ENCODE measurements at regions of chr3 and their contacts with region 1.

Region 1: DNA sequence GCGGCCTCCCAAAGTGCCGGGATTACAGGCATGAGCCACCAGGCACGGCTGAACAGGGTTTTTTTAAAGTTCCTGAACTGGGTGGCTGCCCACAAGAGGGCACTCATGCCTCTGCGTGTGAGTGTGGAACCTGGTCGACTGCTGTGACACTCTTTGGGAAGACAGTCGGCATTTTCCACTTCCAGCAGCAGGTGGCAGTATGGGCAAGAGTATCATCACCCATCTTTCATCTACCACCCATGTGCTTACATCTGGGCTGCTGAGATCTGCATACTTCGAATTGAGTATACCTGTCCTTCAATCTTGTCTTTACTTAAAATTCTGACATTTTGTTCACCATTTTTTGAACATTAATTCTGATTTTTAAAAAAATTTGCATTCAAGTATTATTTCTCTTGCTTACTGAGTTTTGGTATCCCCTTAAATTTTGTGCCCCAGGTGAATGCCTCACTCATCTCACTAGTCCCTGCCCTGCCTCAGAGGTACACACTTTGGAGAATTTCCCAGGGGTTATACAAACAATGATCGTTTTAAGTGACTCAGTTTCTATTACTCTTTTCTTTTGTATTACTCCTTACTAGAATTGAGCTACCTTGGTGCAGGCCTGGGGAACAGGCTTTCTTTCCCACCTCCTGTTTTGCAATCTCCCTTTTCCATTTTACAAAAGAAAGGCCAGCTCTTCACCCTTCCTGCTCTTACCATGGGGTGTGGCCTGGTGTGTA is 11.8 kb downstream of the CLEC3B start:
- DNase-seq: peak; percentile 86
- H3K27ac ChIP-seq: no peak overlapping the region
- CTCF ChIP-seq: peak; percentile 97

Region 2: DNA sequence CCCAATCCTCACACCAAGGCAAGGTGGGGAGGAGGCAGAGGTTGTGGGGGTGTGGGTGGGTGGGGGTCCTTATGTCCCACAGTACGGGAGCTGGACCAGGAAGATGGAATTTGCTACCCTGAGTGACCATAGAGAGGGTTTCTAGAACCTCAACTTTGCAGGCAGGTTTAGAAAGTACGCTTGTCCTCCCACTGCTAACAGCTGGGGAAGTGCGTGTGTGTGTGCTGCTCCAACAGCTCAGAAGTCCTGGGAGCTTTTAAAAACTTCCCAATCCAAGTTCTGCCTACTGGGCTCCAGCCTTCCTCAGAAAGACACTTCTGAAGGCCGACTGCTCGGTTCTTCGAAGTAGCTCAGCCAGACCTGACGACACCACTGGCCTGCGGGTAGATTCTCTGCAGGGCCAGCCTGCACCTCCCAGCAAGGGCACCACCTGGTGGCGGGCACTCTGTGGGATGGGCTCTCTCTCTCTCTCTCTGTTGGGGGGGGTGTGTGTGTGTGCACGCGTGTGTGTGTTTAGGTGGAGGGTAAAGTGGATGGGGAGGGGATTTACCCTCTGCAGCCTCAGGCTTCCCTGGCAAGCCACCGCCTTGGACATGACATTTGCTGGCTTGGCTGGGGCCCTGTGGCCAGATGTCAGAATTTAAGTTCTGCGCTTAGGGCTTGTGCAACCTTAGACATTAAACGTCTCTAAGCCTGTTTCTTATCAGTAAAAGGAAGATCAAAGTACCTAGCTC is 172.6 kb after region 1 on chr3:
- CTCF ChIA-PET with region 1: interaction called, 10 read pairs
- POLR2A ChIA-PET with region 1: no interaction called
- DNase-seq: peak; percentile 62
- H3K27ac ChIP-seq: peak overlapping the region; percentile 48
- CTCF ChIP-seq: peak; percentile 79

Region 3: GRCh38 chr3:45499529-45499928 is 461.6 kb after region 1 on chr3:
- CTCF ChIA-PET with region 1: interaction called, 10 read pairs
- POLR2A ChIA-PET with region 1: no interaction called
- DNase-seq: no peak
- H3K27ac ChIP-seq: no peak overlapping the region
- CTCF ChIP-seq: peak; percentile 51

Measured in RWPE1 (cell line).